Caco-2 (cell line): ENCODE measurements at regions of chr14 and their contacts with region 1.

Region 1: GRCh38 chr14:104576232-104576969 is 3.2 kb upstream of the C14orf180 start:
- DNase-seq: peak; percentile 22 to 46
- H3K4me3 ChIP-seq: no peak overlapping the region
- H3K4me3 Mint-ChIP-seq: no peak overlapping the region
- H3K27ac Mint-ChIP-seq: no peak overlapping the region
- H3K4me1 ChIP-seq: peaks cover 17% of the 10 kb centered on the region
- H3K4me1 Mint-ChIP-seq: no peaks in the 10 kb centered on the region
- H3K27me3 ChIP-seq: no peaks in the 10 kb centered on the region
- H3K27me3 Mint-ChIP-seq: no peaks in the 10 kb centered on the region
- CTCF ChIP-seq: no peak

Region 2: DNA sequence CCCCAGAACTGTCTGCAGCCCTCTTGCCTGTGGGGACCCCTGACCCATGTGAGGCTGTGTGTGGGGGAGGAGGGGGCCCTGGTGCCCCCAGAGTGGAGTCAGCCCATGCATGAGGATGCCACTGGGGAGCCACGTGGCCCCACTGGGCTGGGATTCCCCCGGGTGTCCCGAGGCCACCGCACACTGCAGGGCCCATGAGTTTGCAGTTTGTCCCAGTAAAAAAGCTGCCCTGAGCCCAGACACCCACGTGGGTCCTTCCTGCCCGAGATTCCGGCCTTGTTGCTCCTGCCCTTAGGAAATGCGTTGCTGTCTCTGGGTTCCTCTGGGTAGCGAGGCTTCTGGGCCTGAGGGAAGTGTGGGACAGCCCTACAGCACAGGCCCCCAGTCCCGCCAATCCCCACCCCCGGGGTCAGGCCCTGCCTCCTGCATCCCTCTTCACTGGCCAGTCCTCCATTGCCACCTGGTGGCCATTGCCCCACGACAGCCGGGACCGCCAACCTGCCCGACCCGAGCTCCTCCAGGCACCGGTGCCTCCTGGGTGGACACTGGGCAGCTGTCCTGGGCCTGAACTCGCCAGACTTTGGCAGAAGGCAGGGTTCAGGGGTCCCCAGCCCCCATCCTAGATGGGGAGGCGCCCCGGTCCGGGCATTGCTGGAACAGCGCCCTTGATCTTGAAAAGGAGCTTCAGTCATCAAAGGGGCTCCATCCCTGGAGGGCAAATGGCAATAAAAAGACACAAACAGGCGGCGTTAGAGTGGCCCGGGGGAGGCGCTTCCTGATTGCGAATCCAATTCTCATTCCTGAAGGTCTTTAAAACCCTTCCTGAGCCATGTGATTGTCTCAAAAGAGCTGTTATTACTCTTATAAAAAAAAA is 12.4 kb before region 1 on chr14:
- CTCF ChIA-PET with region 1: interaction called, 10 read pairs
- POLR2A ChIA-PET with region 1: interaction called, 5 read pairs
- intact Hi-C with region 1: no loop called
- DNase-seq: peak; percentile 79 to 85
- H3K4me3 ChIP-seq: no peak overlapping the region
- H3K4me3 Mint-ChIP-seq: no peak overlapping the region
- H3K27ac Mint-ChIP-seq: no peak overlapping the region
- H3K4me1 ChIP-seq: peaks cover 3% of the 10 kb centered on the region
- H3K4me1 Mint-ChIP-seq: no peaks in the 10 kb centered on the region
- H3K27me3 ChIP-seq: 0 out of 2 replicates have a peak, but pooled peaks cover 1% of the 10 kb centered on the region
- H3K27me3 Mint-ChIP-seq: peaks cover 17% of the 10 kb centered on the region
- CTCF ChIP-seq: peak; percentile 68 to 83

Region 3: DNA sequence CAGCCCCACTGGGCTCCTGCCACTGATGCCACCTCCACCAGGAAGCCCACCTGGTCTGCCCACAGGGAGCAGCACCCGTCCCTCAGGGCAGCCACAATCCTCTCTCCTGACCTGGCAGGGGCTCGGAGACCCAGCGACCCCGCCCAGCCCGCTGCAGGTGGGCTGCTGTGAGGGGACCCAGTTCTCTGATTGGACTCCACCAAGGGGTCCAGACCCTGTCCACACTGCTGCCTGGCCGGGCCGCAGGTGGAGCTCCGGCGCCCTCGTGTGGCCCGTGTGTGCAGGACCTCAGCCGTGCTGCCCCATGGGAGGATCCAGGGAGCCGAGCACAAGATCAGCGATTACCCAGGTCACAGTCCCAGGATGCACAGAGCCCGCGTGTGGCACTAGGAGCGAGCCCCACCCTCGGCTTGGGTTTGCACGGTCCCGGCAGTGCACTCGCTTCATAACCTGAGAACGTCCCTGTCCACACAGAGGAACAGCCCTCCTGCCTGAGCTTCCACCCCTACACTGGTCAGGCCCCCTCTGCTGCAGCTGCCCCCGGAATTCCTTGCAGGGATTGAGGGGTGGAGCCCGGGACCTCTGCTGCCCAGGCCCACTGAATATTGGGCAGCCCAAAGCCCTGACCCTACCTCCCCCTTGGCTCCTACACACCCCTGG is 63.6 kb after region 1 on chr14:
- CTCF ChIA-PET with region 1: interaction called, 3 read pairs
- POLR2A ChIA-PET with region 1: no interaction called
- intact Hi-C with region 1: loop called (anchors 2 kb)
- DNase-seq: peak; percentile 67 to 81
- H3K4me3 ChIP-seq: no peak overlapping the region
- H3K4me3 Mint-ChIP-seq: no peak overlapping the region
- H3K27ac Mint-ChIP-seq: no peak overlapping the region
- H3K4me1 ChIP-seq: peaks cover 7% of the 10 kb centered on the region
- H3K4me1 Mint-ChIP-seq: peaks cover 14% of the 10 kb centered on the region
- H3K27me3 ChIP-seq: no peaks in the 10 kb centered on the region; the same call in 1 of the 2 replicates
- H3K27me3 Mint-ChIP-seq: peaks cover 20% of the 10 kb centered on the region
- CTCF ChIP-seq: peak; percentile 90 to 92